ENCODE measurements at regions of chr1 and their contacts with region 1.

Region 1: DNA sequence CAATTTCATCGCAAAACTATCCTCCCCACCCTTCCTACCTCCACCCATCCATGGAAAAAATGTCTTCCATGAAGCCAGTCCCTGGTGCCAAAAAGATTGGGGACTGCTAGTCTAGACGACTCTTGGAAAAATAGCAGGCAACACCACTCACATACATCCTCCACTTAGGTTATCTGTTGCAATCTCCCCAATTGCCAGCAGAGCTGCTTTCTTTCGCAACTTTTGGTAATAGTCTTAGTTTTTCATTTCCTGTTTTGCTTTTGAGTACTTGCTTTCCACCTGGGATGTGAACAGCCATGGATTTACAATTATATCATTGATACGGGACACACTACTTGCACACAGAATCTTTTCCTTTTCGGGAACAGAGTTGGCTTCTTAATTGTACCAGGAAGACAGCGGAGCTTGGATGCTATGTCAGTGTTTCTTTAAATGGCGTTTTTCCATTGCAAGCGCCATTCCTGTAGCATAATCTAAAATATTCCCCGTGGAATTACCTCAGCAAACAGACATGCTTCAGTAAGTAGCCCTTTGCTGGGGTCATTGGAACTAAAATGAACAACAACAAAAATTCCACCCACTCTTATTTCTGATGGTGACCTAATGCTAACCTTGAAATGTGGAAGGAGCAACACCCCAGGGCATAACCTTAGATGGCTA is 183.3 kb upstream of the ADGRL2 start:
- DNase-seq: no peak
- CTCF ChIP-seq: no peak

Region 2: DNA sequence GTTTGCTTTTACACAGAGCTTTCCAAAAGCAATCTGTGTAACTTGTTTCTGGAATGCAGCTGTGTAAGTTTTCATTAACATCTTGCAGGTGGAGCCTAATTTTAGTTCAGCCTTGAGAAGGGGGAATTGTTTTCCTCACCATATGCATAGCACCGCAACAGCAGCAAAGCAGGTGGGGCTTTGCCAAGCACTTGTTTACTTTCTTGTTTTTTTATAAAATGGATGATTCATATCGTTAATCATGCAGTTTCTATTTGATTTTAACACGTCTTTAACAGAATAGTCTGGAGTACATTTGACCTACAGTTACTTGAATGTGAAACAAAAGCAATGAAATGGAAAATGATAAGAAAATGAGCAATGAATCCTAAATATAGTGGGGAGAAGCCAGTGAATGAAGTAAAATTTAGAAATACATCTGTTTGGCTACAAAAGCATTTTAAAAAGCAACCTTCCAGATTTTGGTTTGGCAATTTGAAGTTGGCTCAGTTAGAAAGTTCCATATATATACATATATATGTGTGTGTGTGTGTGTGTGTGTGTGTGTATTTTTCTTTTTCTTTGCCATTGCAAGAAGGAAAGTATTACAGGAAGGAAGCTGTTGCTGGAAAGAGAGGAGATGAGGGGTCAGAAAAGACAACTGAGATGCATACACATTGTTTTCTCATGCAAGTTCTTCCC is 64.3 kb after region 1 on chr1:
- in situ Hi-C with region 1: loop called (anchors 10 kb)
- DNase-seq: no peak
- CTCF ChIP-seq: no peak

Measured in GM13976 (cell line).